ENCODE measurements at regions of chr4 and their contacts with region 1.

Region 1: GRCh38 chr4:16838226-16838875 is 60.1 kb downstream of the LDB2 start:
- DNase-seq: no peak
- ATAC-seq: no peak
- H3K4me3 ChIP-seq: no peak overlapping the region
- H3K27ac ChIP-seq: no peak overlapping the region
- H3K4me1 ChIP-seq: no peaks in the 10 kb centered on the region
- H3K27me3 ChIP-seq: no peaks in the 10 kb centered on the region
- CTCF ChIP-seq: no peak
- EP300 ChIP-seq: no peak
- POLR2A ChIP-seq: no peak
- RAD21 ChIP-seq: no peak

Region 2: GRCh38 chr4:16897991-16898827 is 59.9 kb after region 1 on chr4 and contains the start of gene LDB2:
- CTCF ChIA-PET with region 1: no interaction called
- POLR2A ChIA-PET with region 1: no interaction called
- RAD21 ChIA-PET with region 1: no interaction called
- SMC1A ChIA-PET with region 1: no interaction called
- in situ Hi-C with region 1: loop called (anchors 10 kb)
- intact Hi-C with region 1: no loop called
- DNase-seq: no peak
- ATAC-seq: no peak
- H3K4me3 ChIP-seq: no peak within 1 kb of the TSS
- H3K27ac ChIP-seq: no peak within 1 kb of the TSS
- H3K4me1 ChIP-seq: no peaks in the 10 kb centered on the region
- H3K27me3 ChIP-seq: no peaks in the 10 kb centered on the region
- CTCF ChIP-seq: no peak
- EP300 ChIP-seq: no peak
- POLR2A ChIP-seq: no peak
- RAD21 ChIP-seq: no peak
- polyA plus RNA-seq, gene LDB2: not detected